ENCODE measurements at regions of chr1 and their contacts with region 1.

Region 1: GRCh38 chr1:215076318-215076717 is 6.2 kb upstream of the KCNK2 start:
- DNase-seq: peak; percentile 80
- ATAC-seq: peak; percentile 96
- H3K4me3 ChIP-seq: no peak overlapping the region
- H3K27ac ChIP-seq: no peak overlapping the region
- H3K4me1 ChIP-seq: no peaks in the 10 kb centered on the region
- H3K27me3 ChIP-seq: no peaks in the 10 kb centered on the region
- CTCF ChIP-seq: peak; percentile 91

Region 2: DNA sequence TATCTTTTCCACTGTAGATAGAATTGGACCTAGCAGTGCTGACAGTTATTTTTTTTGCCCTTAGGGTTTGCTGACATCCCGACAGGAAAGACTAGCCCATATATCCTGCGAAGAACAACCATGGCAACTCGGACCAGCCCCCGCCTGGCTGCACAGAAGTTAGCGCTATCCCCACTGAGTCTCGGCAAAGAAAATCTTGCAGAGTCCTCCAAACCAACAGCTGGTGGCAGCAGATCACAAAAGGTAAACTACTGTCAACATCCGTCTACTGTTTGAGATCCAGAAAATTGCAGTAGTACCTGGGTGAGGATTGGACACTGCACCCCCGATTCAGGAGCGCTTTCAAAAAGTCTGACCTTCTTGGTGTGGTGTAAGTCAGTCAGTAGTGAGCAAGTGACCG is 417.5 kb before region 1 on chr1:
- CTCF ChIA-PET with region 1: no interaction called
- POLR2A ChIA-PET with region 1: no interaction called
- intact Hi-C with region 1: loop called (anchors 1 kb)
- DNase-seq: peak; percentile 46
- ATAC-seq: peak; percentile 70
- H3K4me3 ChIP-seq: no peak overlapping the region
- H3K27ac ChIP-seq: no peak overlapping the region
- H3K4me1 ChIP-seq: no peaks in the 10 kb centered on the region
- H3K27me3 ChIP-seq: no peaks in the 10 kb centered on the region
- CTCF ChIP-seq: peak; percentile 65

Region 3: GRCh38 chr1:215095562-215095961 is 19.2 kb after region 1 on chr1:
- CTCF ChIA-PET with region 1: no interaction called
- POLR2A ChIA-PET with region 1: no interaction called
- intact Hi-C with region 1: loop called (anchors 2 kb)
- DNase-seq: no peak
- ATAC-seq: no peak
- H3K4me3 ChIP-seq: no peak overlapping the region
- H3K27ac ChIP-seq: no peak overlapping the region
- H3K4me1 ChIP-seq: no peaks in the 10 kb centered on the region
- H3K27me3 ChIP-seq: peaks cover 8% of the 10 kb centered on the region; the same call in 1 of the 2 replicates
- CTCF ChIP-seq: no peak